Left cardiac atrium (tissue), 4 donors: ENCODE measurements at regions of chr5 and their contacts with region 1.

Region 1: GRCh38 chr5:96868603-96869371 is 7.5 kb upstream of the ERAP2 start:
- DNase-seq: no peak
- ATAC-seq: peak; percentile 90

Region 2: DNA sequence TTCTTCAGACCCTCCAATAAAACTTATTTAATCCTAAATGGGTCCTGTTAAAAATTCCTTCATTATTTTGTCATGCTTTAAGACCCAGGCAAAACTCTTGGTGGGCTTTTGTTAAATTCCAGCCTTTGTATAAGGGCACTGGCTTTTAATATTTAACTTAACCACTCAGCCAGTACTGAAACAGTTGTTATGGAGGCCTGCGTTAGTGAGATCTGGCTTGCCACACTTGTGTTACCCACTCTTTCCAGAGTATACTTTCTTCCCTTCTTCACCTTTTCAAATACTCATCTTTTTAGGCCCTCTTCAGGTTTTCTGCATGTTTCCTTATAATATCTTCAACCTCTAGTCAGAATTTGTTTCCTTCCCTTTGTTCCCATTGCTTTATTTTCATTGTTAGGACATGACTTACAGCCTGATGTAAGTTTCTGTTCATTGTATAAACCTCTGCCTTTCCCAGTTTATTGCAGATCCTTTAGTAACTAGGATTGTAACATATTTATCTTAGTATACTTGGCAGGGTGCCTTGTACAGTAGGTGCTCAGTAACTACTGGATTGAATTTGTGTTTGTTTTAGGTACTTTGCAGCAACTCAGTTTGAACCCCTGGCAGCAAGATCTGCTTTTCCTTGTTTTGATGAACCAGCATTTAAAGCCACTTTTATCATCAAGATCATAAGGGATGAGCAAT is 115.9 kb after region 1 on chr5:
- intact Hi-C with region 1: loop called in 1 of 2 experiments (anchors 5 kb)
- DNase-seq: no peak
- ATAC-seq: no peak

Region 3: GRCh38 chr5:97142521-97143254 is 273.9 kb after region 1 on chr5 and contains the start of gene LIX1:
- intact Hi-C with region 1: loop called in 1 of 2 experiments (anchors 5 kb)
- DNase-seq: no peak
- ATAC-seq: peak; percentile 72 to 83
- total RNA-seq, gene LIX1: 0.15 to 0.16 TPM

Region 4: DNA sequence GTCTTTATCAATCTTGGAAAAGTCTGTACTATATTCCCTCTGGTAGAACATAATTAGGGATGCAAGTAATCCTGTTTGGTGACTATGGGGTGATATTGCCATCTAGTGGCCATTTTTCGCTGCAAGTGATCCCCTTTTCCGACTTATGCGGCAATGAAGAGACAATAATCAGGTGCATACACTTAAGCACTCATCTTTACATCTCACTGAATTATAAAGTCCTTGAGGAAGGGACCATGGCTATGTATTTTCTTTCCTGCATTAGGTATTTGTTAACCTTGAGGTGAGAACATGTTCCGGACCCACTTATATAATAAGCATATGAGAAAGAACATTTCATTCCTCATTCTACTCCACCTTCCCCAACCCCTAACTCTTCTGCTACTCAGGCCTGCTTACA is 293.3 kb after region 1 on chr5:
- intact Hi-C with region 1: loop called in 1 of 2 experiments (anchors 2 kb)
- DNase-seq: no peak
- ATAC-seq: peak; percentile 57 to 67